ENCODE measurements at regions of chr12 and their contacts with region 1.

Region 1: GRCh38 chr12:108803428-108804105 is 53.8 kb downstream of the SSH1 start:
- DNase-seq: peak; percentile 77 to 84 (median 81)
- H3K4me3 ChIP-seq: no peak overlapping the region
- H3K27ac ChIP-seq: no peak overlapping the region
- H3K4me1 ChIP-seq: peaks cover 0 to 3% (median 1%) of the 10 kb centered on the region in 4 experiments
- H3K27me3 ChIP-seq: no peaks in the 10 kb centered on the region

Region 2: DNA sequence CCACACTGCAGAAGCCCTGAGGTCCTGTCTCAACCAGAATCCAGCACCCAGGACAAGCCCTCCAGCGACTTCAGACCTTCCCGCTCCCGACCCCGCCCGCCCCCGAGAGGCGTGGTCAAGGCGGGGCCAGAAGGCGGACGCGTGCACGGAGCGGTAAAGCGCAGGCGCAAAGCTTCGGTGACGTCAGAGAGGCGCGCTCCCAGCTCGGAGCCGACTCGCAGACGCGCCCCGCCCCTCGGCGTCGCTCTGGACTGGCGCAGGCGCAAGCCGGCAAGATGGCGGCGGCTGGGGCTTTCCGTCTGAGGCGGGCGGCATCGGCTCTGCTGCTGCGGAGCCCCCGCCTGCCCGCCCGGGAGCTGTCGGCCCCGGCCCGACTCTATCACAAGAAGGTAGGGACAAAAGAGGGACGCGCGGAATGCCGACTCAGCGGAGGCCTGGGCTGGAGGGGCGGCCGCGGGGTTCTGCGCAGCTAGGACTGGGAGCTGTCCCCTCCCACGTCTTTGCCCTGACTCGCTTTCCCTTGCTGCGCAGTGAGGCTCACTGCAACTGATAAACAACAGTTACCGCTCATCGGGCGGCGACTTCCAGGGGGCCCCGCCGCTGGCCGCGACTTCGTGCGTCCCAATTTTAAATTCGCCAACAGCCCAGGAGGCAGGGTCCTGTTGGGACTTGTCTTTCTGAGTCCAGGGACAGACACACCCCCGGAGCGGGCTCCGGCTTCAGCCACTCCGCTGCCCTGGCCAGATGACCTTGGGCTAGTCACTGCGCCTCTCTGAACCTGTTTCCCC is 241.0 kb before region 1 on chr12 and contains the start of gene ISCU:
- CTCF ChIA-PET with region 1: interaction called, 15 read pairs
- POLR2A ChIA-PET with region 1: interaction called, 4 read pairs
- DNase-seq: peak; percentile 96 to 98 (median 97)
- H3K4me3 ChIP-seq: peak within 1 kb of the TSS; percentile 90 to 100 (median 99)
- H3K27ac ChIP-seq: peak within 1 kb of the TSS; percentile 96 to 99
- H3K4me1 ChIP-seq: peaks cover 41 to 79% (median 66%) of the 10 kb centered on the region in 4 experiments
- H3K27me3 ChIP-seq: no peaks in the 10 kb centered on the region

Region 3: DNA sequence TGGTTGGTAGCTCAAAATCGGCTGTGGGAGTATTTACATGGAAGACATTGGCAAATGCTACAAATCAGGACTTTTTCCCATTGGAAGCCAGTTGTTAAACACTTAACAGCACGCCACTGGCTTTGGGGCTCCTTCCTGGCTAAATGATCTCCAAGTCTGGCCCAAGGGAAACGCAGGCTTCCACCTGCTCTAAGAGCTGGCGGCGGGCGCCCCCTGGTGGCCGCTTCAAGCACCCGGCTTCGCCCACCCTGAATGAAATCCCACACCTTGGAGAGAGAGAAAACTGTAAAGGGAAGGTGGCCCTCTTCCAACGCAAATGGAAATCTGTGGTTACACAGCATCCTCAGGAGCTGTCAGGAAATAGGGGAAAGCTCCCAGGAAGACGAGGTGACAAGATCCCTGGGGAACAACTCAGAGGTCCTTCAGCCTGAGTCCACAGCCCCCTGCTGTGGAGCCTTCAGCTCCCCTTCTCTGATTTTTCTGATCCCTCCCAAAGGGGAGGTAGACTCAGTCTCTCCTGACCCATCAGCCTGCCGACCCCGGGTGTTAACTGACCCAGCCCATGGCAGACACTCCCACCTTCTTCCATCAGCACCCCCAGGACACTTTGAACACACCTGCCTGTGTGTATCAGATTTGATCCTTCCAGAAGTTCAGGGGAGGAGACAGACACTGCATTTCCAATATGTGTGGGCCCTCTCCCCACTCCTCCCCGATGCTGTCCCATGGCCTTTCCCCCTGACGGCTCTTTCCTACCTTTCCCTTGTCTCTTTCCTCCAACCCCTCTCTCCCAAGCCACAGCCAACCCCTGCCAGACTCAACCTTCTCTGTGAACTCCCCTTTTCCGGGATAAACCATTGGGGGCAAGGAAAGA is 185.3 kb before region 1 on chr12:
- CTCF ChIA-PET with region 1: interaction called, 21 read pairs
- POLR2A ChIA-PET with region 1: no interaction called
- DNase-seq: peak; percentile 76 to 84 (median 82)
- H3K4me3 ChIP-seq: no peak overlapping the region
- H3K27ac ChIP-seq: no peak overlapping the region
- H3K4me1 ChIP-seq: peaks cover 3 to 47% (median 20%) of the 10 kb centered on the region in 4 experiments
- H3K27me3 ChIP-seq: no peaks in the 10 kb centered on the region

Region 4: DNA sequence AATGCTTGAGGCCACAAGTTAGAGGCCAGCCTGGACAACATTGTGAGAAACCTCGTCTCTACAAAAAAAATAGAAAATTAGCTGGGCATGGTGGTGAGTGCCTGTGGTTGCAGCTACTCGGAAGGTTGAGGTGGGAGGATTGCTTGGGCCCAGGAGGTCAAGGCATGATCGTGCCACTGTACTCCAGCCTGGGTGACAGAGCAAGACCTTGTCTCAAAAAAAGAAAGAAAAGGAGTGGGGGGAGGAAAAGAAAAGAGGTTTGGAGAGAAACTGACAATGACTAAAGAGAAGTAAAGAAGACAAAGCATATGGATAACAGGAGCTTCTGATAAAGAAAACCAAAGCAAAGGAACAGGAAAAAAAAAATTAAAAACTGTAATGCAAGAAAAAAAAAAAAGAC is 132.5 kb before region 1 on chr12:
- CTCF ChIA-PET with region 1: interaction called, 185 read pairs
- POLR2A ChIA-PET with region 1: no interaction called
- DNase-seq: no peak
- H3K4me3 ChIP-seq: no peak overlapping the region
- H3K27ac ChIP-seq: peak overlapping the region in 1 of 2 experiments; percentile 28
- H3K4me1 ChIP-seq: peaks cover 11 to 23% (median 19%) of the 10 kb centered on the region in 4 experiments
- H3K27me3 ChIP-seq: no peaks in the 10 kb centered on the region

Region 5: DNA sequence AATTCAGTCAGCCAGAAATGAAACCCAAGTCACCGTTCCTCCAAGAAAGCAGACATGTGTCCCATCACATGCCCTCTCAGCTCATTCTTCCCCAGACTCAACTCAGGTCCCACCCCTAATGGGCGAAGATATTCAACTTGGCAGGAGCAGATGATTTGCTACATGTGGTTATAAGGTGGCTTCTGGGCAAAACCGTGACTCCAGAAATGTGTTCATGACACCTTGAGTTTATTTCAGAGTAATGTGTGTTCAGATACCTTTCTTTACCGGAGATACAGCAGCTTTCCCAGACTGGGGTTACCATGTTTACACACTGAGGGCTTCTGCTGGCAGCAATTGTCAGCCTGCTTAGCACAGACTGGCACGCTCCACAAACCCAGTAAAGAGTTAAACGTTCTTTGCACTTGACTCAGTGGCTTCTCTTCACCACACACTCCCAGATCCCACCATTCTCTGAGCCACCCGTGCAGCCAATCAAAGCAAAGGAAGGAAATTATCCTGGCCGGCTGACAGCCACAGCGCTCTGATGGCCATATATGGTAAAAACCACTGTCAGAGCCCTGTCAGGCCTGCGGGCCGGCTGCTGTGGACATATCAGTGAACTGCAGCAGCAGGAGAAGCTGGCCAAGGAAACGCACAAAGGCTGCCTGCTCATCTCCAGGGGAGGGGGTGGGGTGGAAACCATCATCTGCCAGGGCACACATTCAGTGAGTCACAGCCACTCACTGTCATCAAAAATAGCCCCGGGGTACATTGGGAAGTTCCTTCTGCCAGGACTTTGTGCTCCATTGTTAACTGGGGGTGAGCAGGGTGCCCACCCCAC is 112.2 kb before region 1 on chr12:
- CTCF ChIA-PET with region 1: interaction called, 22 read pairs
- POLR2A ChIA-PET with region 1: interaction called, 4 read pairs
- DNase-seq: peak; percentile 95 to 98 (median 98)
- H3K4me3 ChIP-seq: peak overlapping the region in 6 of 7 experiments; percentile 24 to 67 (median 56)
- H3K27ac ChIP-seq: peak overlapping the region; percentile 69 to 85
- H3K4me1 ChIP-seq: peaks cover 39 to 89% (median 76%) of the 10 kb centered on the region in 4 experiments
- H3K27me3 ChIP-seq: no peaks in the 10 kb centered on the region

Region 6: DNA sequence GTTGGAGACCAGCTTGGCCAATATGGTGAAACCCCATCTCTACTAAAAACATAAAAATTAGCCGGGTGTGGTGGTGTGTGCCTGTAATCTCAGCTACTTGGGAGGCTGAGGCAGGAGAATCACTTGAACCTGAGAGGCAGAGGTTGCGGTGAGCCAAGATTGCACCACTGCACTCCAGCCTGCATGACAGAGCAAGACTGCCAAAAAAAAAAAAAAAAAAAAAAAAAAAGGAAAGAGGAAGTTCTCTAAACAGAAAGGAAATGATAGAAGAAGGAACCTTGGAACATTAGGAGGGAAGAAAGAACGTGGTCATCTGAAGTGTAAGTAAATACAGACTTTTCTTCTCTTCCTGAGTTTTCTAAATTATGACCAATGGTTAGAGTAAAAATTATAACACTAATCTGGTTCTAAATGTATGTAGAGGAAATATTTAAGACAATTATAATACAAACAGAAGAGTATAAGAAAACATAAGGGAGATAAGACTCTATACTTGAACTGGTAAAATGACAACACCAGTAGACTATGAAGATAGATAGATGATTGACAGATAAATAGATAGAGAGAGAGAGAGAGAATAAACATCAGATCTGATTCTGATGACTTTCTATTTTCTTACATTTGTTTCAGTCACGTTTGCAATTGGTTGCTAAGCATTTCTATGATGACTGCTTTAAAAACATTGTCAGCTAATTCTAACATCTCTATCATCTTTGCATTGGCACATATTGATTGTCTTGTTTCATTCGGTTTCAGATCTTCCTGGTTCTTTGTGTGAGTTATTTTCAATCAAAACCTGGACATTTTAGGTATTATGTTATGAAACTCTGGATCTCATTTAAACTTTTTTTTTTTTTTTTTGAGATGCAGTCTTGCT is 59.3 kb before region 1 on chr12:
- CTCF ChIA-PET with region 1: no interaction called
- POLR2A ChIA-PET with region 1: no interaction called
- DNase-seq: peak in 2 of 3 donors; percentile 55 to 65
- H3K4me3 ChIP-seq: no peak overlapping the region
- H3K27ac ChIP-seq: no peak overlapping the region
- H3K4me1 ChIP-seq: peaks cover 0 to 20% (median 4%) of the 10 kb centered on the region in 4 experiments
- H3K27me3 ChIP-seq: no peaks in the 10 kb centered on the region

Region 7: GRCh38 chr12:108768591-108769500 is 34.7 kb before region 1 on chr12:
- CTCF ChIA-PET with region 1: interaction called, 10 read pairs
- POLR2A ChIA-PET with region 1: no interaction called
- DNase-seq: peak; percentile 80 to 88 (median 83)
- H3K4me3 ChIP-seq: peak overlapping the region; percentile 10 to 78 (median 44)
- H3K27ac ChIP-seq: no peak overlapping the region
- H3K4me1 ChIP-seq: peaks cover 0 to 24% (median 19%) of the 10 kb centered on the region in 4 experiments
- H3K27me3 ChIP-seq: no peaks in the 10 kb centered on the region

Region 8: DNA sequence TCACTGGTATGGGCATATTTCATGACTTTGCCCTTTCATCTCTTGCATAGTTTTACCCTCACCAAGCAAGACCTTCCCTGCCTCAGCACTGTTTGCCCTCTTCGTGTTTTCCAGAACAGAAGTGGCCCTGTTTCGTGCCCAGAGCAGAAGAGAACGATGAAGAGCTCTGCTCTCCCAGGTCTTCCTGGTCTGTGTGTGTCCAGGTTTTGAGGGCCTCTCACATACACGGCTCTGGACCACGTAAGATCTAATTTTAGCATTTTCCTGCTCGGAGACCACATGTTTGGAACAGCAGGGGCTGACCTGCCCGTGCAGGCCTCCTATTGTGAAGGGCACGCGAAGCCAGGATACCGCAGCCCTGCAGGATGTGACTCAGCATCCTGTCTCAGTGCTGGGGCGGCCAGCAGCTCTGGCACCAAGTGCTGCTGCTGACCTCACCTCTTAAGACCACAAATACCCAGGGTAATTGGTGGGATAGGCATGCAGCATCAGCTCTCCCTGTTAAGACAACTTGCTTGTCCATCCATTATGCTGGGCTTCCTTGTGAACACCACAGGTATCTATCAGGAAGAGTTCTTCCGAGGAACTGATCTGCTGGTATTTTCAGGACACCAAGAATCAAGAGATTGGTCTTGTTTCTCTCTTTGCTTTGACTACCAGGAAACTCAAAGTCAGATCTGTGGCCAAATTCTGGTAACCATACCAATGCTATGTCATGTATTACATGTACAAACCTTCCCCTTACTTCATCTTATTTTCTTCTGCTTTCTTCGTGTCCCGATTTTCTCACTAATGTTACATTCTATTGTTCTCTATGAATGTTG is 34.8 kb after region 1 on chr12:
- CTCF ChIA-PET with region 1: interaction called, 13 read pairs
- POLR2A ChIA-PET with region 1: no interaction called
- DNase-seq: peak; percentile 94 to 98 (median 98)
- H3K4me3 ChIP-seq: peak overlapping the region in 2 of 7 experiments; percentile 23 to 49
- H3K27ac ChIP-seq: peak overlapping the region; percentile 80 to 92
- H3K4me1 ChIP-seq: peaks cover 10 to 65% (median 48%) of the 10 kb centered on the region in 4 experiments
- H3K27me3 ChIP-seq: no peaks in the 10 kb centered on the region